ENCODE measurements at regions of chr3 and their contacts with region 1.

Region 1: DNA sequence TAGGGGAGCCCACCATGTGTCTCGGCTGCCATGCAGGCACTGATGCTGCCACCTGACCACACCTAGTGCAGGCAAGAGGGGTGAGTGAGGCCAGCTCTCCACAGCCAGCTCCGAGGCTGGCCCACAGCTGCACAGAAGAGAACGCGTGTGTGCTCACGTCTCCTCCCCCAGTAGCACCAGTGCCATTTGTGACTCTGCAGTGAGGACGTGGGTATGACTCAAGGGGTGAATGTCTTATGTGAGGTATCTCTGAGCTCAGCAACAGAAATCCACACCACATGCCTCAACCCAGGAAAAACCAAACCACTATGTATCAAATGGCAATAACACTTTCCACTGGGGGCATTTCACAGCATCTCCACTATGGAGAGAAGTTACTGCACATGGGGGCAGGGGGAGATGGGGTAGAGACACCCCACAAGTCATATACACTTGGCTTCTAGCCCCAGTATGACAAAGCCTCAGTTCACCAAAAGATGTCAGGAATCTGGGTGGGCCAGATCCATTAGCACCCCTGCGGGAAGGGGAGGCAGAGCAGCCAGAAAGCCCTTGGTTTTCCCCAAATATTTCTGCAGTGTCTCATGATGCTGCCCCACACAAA is 87.6 kb downstream of the LRIG1 start:
- DNase-seq: peak; percentile 14
- ATAC-seq: peak in 1 of 2 donors; percentile 18

Region 2: GRCh38 chr3:66449411-66449974 is 36.2 kb after region 1 on chr3:
- intact Hi-C with region 1: loop called in 1 of 2 experiments (anchors 5 kb)
- DNase-seq: peak; percentile 48
- ATAC-seq: peak; percentile 21 to 55